MCF 10A (cell line): ENCODE measurements at regions of chr13 and their contacts with region 1.

Region 1: GRCh38 chr13:101144808-101145419 is 271.4 kb downstream of the NALCN start:
- DNase-seq: peak; percentile 67
- H3K4me3 Mint-ChIP-seq: no peak overlapping the region
- H3K27ac Mint-ChIP-seq: no peak overlapping the region
- H3K4me1 Mint-ChIP-seq: no peaks in the 10 kb centered on the region
- H3K27me3 Mint-ChIP-seq: no peaks in the 10 kb centered on the region
- CTCF ChIP-seq: peak; percentile 60

Region 2: GRCh38 chr13:101242720-101243119 is 97.8 kb after region 1 on chr13:
- CTCF ChIA-PET with region 1: no interaction called
- POLR2A ChIA-PET with region 1: no interaction called
- intact Hi-C with region 1: no loop called
- DNase-seq: peak; percentile 37
- H3K4me3 Mint-ChIP-seq: no peak overlapping the region
- H3K27ac Mint-ChIP-seq: no peak overlapping the region
- H3K4me1 Mint-ChIP-seq: peaks cover 10% of the 10 kb centered on the region
- H3K27me3 Mint-ChIP-seq: no peaks in the 10 kb centered on the region
- CTCF ChIP-seq: no peak

Region 3: GRCh38 chr13:101298517-101298916 is 153.6 kb after region 1 on chr13:
- CTCF ChIA-PET with region 1: interaction called, 20 read pairs
- POLR2A ChIA-PET with region 1: no interaction called
- intact Hi-C with region 1: loop called (anchors 2 kb)
- DNase-seq: no peak
- H3K4me3 Mint-ChIP-seq: no peak overlapping the region
- H3K27ac Mint-ChIP-seq: no peak overlapping the region
- H3K4me1 Mint-ChIP-seq: no peaks in the 10 kb centered on the region
- H3K27me3 Mint-ChIP-seq: no peaks in the 10 kb centered on the region
- CTCF ChIP-seq: no peak

Region 4: DNA sequence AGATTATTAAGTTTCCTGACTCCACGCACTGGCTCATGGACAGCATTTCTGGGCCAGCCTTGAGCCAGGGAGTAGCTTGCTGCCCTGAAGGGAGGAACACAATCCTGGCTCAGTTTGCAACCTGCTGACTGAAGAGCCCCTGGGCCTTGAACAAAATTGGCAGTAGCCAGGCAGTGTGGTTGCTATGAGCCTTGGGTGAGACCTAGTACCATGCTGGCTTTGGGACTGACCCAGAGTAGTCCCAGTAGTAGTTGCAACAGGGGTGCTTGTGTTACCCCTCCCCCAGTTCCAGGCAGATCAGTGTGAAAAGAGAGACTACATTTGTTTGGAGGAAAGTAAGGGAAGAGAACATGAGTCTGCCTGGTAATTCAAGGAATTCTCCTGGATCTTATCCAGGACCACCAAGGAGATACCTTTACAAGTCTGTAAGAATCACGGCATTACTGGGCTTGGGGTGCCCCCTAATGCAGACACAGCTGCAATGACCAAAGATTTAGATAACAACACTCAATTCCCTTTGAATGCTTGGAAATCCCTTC is 329.6 kb after region 1 on chr13:
- CTCF ChIA-PET with region 1: interaction called, 46 read pairs
- POLR2A ChIA-PET with region 1: no interaction called
- intact Hi-C with region 1: loop called (anchors 1 kb)
- DNase-seq: peak; percentile 73
- H3K4me3 Mint-ChIP-seq: no peak overlapping the region
- H3K27ac Mint-ChIP-seq: no peak overlapping the region
- H3K4me1 Mint-ChIP-seq: peaks cover 19% of the 10 kb centered on the region
- H3K27me3 Mint-ChIP-seq: no peaks in the 10 kb centered on the region
- CTCF ChIP-seq: peak; percentile 54

Region 5: DNA sequence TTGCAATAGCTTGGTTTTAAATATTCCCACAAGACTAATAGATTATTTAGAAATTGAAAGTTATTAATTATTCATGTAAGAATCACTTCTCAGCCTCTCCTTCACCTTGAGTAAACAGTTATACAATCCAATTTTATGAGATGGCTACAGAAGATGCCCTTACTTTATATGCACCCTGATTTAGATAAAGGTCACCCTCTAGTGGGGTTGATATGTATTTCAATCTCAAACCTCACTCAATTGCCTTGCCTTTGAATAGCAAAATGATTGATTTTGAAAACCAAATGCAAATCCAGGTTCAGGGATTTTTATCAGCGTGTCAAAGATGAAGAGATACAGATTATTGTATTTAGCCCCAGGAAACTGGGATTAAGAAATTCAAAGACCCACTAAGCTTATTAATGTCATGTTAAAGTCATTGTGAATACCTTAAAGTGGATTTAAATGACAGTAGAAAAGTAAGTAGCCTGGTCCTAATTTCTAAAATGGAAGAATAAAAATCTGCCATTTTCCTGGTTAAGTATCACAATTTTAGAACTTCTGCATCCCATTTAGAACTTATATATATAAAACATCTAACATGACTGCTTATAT is 612.6 kb after region 1 on chr13:
- CTCF ChIA-PET with region 1: interaction called, 56 read pairs
- POLR2A ChIA-PET with region 1: interaction called, 5 read pairs
- intact Hi-C with region 1: loop called (anchors 1 kb)
- DNase-seq: peak; percentile 56
- H3K4me3 Mint-ChIP-seq: no peak overlapping the region
- H3K27ac Mint-ChIP-seq: no peak overlapping the region
- H3K4me1 Mint-ChIP-seq: no peaks in the 10 kb centered on the region
- H3K27me3 Mint-ChIP-seq: no peaks in the 10 kb centered on the region
- CTCF ChIP-seq: peak; percentile 69

Region 6: DNA sequence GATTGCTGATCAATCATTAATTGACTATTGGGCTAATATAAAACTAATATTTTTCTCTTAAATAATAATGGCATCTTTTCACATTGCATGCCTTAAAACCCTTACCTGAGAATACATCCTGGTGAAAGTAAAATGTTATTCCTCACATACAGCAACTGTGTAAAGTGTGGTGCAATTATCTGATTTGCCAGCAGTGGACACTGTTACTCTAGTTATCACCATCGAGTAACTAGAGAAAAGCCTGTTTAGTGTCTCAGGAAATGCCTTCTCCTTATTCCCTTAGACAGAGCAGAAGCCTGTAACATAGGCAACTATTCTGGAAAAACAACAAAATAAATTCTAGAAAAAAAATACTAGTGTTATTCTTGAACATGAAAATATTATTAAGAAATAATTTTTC is 797.1 kb after region 1 on chr13:
- CTCF ChIA-PET with region 1: interaction called, 6 read pairs
- POLR2A ChIA-PET with region 1: no interaction called
- intact Hi-C with region 1: loop called (anchors 1 kb)
- DNase-seq: peak; percentile 65
- H3K4me3 Mint-ChIP-seq: no peak overlapping the region
- H3K27ac Mint-ChIP-seq: no peak overlapping the region
- H3K4me1 Mint-ChIP-seq: no peaks in the 10 kb centered on the region
- H3K27me3 Mint-ChIP-seq: peaks cover 40% of the 10 kb centered on the region
- CTCF ChIP-seq: peak; percentile 77